Mammary epithelial cell (primary cell): ENCODE measurements at regions of chr6 and their contacts with region 1.

Region 1: DNA sequence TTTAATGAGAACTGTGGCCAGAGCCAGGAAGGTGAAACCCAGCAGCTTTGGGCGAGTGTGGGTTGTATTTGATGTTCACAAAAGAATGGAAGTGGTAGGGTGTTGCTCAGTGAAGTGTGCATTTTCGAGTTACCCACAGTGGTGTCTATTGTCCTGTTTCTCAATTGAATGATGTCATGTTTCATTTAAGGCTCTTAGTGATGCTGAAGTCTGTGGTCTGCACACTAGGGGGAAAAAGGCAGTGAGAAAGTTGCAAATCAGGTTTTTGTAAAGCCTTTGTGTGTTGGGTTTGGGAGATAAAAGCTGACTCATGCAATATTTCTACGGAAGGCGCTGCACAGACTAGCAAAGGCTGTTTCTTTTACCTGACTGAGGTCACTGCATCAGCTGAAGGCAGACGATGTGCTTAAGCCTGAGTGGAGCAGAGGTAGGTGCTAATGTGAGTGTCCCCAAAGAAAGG is 121.1 kb downstream of the PLEKHG1 start:
- DNase-seq: peak; percentile 99
- H3K4me3 ChIP-seq: no peak overlapping the region
- H3K27ac ChIP-seq: peak overlapping the region; percentile 77
- H3K4me1 ChIP-seq: peaks cover 29% of the 10 kb centered on the region
- H3K27me3 ChIP-seq: no peaks in the 10 kb centered on the region
- CTCF ChIP-seq: peak; percentile 13 to 21

Region 2: DNA sequence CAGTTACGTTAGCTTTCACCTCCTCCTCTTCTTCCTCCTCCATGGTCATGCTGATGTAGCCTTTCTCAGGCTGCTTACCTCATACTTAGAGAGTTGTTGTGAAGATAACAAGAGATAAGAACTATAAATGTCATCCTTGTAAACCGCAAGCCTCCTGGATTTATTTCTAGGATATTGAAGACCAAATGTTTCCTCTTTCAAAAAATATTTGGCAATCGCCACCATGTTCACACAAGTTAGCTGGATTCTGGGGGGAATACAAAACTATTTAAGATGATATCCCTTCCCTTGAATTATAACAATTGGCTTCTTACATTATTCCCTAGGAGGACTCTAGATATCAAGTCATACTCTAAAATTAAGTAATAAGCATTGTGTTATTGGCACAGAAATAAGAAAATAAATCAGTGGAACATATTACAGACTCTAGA is 220.9 kb before region 1 on chr6:
- CTCF ChIA-PET with region 1: no interaction called
- dilution Hi-C with region 1: no loop called
- in situ Hi-C with region 1: no loop called
- intact Hi-C with region 1: no loop called
- DNase-seq: no peak
- H3K4me3 ChIP-seq: no peak overlapping the region
- H3K27ac ChIP-seq: no peak overlapping the region
- H3K4me1 ChIP-seq: no peaks in the 10 kb centered on the region
- H3K27me3 ChIP-seq: no peaks in the 10 kb centered on the region
- CTCF ChIP-seq: no peak

Region 3: DNA sequence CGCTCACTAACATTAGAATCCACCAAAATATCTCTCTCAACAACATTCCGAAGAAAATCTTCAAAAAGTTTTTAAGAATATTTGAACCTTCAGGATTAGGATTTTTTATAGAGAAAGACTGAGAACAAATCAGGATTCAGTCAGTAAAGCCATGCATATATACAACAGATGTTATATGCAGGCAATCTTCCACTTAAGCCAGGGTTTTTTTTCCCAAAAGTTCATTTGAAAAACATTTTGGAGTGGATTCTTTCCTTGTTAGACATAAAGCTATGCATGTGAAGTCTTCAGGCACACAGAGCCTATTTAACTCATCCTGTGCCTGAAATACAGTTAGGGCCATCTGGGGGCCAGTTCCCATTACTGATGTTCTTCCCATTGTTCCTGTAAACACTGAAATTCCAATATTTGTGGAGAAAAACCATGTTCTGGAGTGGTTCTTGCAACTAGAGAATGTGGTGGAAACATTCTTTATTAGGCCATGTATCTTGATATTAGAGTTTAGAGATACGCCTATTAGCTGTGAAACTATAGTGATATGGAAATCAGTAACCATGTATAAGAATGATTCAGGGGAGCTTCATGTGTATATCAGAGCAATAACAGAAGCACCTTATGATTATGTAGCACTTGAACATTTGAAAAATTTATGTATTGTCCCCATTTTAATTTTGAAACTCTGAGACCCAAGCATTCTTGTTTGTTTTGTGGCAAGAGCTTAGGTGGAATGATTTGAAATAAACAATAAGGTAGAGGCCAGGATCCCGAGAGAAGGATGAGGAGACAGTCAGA is 59.4 kb before region 1 on chr6:
- CTCF ChIA-PET with region 1: no interaction called
- dilution Hi-C with region 1: loop called (anchors 5 kb)
- in situ Hi-C with region 1: no loop called
- intact Hi-C with region 1: no loop called
- DNase-seq: no peak
- H3K4me3 ChIP-seq: no peak overlapping the region
- H3K27ac ChIP-seq: no peak overlapping the region
- H3K4me1 ChIP-seq: peaks cover 14% of the 10 kb centered on the region
- H3K27me3 ChIP-seq: no peaks in the 10 kb centered on the region
- CTCF ChIP-seq: no peak

Region 4: GRCh38 chr6:150928882-150929281 is 208.1 kb after region 1 on chr6:
- CTCF ChIA-PET with region 1: no interaction called
- dilution Hi-C with region 1: no loop called
- in situ Hi-C with region 1: no loop called
- intact Hi-C with region 1: no loop called
- DNase-seq: no peak
- H3K4me3 ChIP-seq: no peak overlapping the region
- H3K27ac ChIP-seq: no peak overlapping the region
- H3K4me1 ChIP-seq: no peaks in the 10 kb centered on the region
- H3K27me3 ChIP-seq: no peaks in the 10 kb centered on the region
- CTCF ChIP-seq: peak; percentile 13 to 36

Region 5: DNA sequence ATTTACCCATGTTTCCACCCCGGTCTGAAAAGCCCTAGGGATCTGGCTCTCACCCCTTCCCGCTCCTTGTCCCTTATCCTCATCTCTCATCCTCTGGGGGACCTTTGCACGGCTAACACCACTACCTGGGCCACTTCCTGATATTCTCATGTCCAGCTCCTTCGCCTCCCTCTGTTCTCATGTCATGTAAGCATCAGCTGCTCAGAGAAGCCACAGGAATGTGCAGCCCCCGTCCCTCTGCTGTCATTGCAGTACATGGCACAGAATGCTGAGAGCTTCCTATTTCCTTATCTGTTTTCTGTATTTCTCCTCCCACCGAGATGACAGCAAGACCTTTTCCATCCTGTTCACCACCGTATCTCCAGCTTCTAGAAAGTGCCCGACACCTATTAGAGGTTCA is 247.1 kb after region 1 on chr6:
- CTCF ChIA-PET with region 1: no interaction called
- dilution Hi-C with region 1: no loop called
- in situ Hi-C with region 1: no loop called
- intact Hi-C with region 1: no loop called
- DNase-seq: no peak
- H3K4me3 ChIP-seq: no peak overlapping the region
- H3K27ac ChIP-seq: no peak overlapping the region
- H3K4me1 ChIP-seq: no peaks in the 10 kb centered on the region
- H3K27me3 ChIP-seq: no peaks in the 10 kb centered on the region
- CTCF ChIP-seq: no peak

Region 6: DNA sequence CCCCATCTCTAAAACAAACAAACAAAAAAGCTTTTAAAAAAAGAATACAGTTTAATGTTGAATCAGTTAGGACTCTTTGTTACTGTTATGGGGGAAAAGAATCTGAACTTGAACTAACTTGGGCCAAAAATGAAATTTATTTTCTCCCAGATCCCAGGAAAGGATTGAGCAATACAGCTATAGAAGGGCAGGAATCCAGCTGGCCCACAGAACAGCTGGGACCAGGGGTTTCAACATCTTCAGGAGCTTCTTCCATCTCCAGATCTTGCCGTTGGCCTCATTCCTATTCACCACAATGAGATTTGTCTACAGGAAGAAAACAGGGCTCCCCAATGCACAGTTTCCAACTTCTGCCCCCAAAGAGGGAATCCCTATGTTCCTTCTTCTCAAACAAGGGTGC is 475.8 kb after region 1 on chr6:
- CTCF ChIA-PET with region 1: no interaction called
- dilution Hi-C with region 1: no loop called
- in situ Hi-C with region 1: no loop called
- intact Hi-C with region 1: no loop called
- DNase-seq: no peak
- H3K4me3 ChIP-seq: no peak overlapping the region
- H3K27ac ChIP-seq: no peak overlapping the region
- H3K4me1 ChIP-seq: no peaks in the 10 kb centered on the region
- H3K27me3 ChIP-seq: no peaks in the 10 kb centered on the region
- CTCF ChIP-seq: no peak